ENCODE measurements at regions of chrX and their contacts with region 1.

Region 1: GRCh38 chrX:56788717-56789122 is 59.7 kb downstream of the NBDY start:
- DNase-seq: peak; percentile 36
- CTCF ChIP-seq: peak; percentile 67

Region 2: GRCh38 chrX:56978172-56978571 is 189.5 kb after region 1 on chrX:
- in situ Hi-C with region 1: loop called (anchors 25 kb)
- DNase-seq: peak; percentile 41
- CTCF ChIP-seq: peak; percentile 53

Measured in GM13976 (cell line).